ENCODE measurements at regions of chr7 and their contacts with region 1.

Region 1: DNA sequence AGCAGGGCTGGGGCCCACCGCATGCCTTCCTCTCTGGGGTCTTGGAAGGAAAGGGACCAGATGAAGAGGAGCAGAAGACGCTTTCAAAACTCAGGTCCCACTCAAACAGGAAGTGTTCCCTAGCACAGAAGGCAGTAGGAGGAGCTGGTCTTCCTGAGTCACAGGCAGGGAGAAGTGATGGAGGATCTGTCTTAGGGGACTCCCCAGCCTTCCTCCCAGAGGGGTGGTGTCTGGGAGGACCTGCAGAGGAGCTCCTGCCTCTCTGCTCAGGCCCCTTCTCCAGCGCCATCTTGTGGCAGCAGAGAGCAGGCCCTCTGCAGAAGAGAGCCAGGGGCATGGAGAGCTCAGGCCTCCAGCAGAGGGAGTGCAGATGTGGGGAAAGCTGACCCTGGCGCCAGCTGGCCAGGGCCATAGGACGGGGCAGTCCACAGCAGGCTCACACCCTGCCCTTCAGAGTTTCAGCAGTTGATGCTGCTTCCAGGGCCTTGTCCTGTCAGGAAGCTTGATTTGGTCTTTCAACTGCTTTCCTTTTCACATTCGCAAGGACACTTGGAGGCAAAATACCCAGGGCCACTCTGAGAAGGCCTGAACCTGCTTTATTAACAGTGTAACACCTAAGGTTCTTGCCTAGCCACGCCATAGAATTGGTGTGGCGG is 62.2 kb upstream of the TARP start:
- DNase-seq: peak; percentile 75
- CTCF ChIP-seq: peak; percentile 100

Region 2: GRCh38 chr7:37916673-37917660 is 418.7 kb before region 1 on chr7 and contains the start of gene SFRP4:
- in situ Hi-C with region 1: loop called (anchors 25 kb)
- DNase-seq: peak; percentile 61
- CTCF ChIP-seq: peak; percentile 50

Region 3: GRCh38 chr7:38232502-38233366 is 102.9 kb before region 1 on chr7:
- in situ Hi-C with region 1: no loop called
- DNase-seq: peak; percentile 68
- CTCF ChIP-seq: peak; percentile 23